HEK293 (cell line): ENCODE measurements at regions of chr4 and their contacts with region 1.

Region 1: GRCh38 chr4:39527273-39528060 is at the start of gene UGDH:
- H3K4me3 ChIP-seq: peak within 1 kb of the TSS; percentile 97
- H3K27ac ChIP-seq: peak within 1 kb of the TSS; percentile 64
- H3K4me1 ChIP-seq: no peaks in the 10 kb centered on the region
- CTCF ChIP-seq: no peak; the same call in 1 of the 2 replicates

Region 2: GRCh38 chr4:39458505-39459300 is 68.8 kb before region 1 on chr4 and contains the starts of genes LIAS and RPL9:
- CTCF ChIA-PET with region 1: no interaction called
- POLR2A ChIA-PET with region 1: interaction called, 14 read pairs
- H3K4me3 ChIP-seq: peak within 1 kb of the TSS; percentile 83
- H3K27ac ChIP-seq: peak within 1 kb of the TSS; percentile 96
- H3K4me1 ChIP-seq: no peaks in the 10 kb centered on the region
- CTCF ChIP-seq: no peak

Region 3: DNA sequence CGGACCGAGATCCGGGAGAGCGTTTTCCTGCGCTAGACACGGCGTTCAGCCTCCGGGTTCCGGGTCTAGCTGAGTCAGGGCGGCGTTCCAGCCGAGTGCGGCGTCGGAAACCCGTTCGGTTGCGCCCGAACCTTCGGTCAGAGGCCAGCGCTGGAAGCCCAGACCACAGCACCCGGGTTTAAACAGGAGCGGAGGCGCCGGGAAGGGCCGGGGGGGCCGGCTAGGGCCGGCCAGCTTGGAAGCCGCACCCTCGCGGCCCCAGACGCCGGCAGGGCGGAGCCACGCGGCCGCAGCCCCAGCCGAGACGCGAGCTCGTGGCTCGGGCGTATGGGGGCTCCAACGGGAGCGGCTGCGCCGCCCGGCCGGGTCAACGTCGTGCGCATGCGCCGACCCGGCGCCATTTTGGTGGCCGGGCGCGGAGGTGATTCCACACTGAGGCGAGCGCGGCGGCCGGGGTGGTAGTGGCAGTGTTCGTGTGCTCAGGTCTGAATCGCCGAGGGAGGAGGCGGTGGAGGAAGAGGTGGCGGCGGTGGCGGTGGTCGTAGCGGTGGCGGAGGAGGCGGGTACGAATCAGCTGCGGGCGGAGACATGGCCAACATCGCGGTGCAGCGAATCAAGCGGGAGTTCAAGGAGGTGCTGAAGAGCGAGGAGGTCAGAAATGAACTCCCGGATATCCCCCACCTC is 170.4 kb after region 1 on chr4 and contains the start of gene UBE2K:
- CTCF ChIA-PET with region 1: no interaction called
- POLR2A ChIA-PET with region 1: interaction called, 10 read pairs
- H3K4me3 ChIP-seq: peak within 1 kb of the TSS; percentile 98
- H3K27ac ChIP-seq: peak within 1 kb of the TSS; percentile 88
- H3K4me1 ChIP-seq: no peaks in the 10 kb centered on the region; the same call in 1 of the 2 replicates
- CTCF ChIP-seq: 0 out of 2 replicates have a peak, but pooled peaks have one; percentile 26

Region 4: DNA sequence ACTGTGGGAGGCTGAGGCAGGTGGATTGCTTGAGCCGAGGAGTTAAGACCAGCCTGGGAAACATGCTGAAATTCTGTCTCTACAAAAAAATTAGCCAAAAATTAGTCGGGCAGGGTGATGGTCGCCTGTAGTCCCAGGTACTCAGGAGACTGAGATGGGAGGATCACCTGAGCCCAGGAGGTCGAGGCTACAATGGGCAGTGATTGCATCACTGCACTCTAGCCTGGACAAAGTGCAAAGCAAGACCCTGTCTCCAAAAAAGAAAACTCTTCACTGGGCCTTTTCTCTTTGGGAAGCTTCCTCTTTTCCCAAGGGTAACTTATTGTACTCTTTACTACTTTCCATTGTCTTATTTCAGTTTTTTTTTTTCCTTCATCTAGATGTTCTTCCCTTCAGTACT is 259.4 kb after region 1 on chr4:
- CTCF ChIA-PET with region 1: no interaction called
- POLR2A ChIA-PET with region 1: no interaction called
- H3K4me3 ChIP-seq: no peak overlapping the region
- H3K27ac ChIP-seq: no peak overlapping the region
- H3K4me1 ChIP-seq: no peaks in the 10 kb centered on the region
- CTCF ChIP-seq: no peak